CD4-positive, alpha-beta memory T cell (primary cell): ENCODE measurements at regions of chr3 and their contacts with region 1.

Region 1: DNA sequence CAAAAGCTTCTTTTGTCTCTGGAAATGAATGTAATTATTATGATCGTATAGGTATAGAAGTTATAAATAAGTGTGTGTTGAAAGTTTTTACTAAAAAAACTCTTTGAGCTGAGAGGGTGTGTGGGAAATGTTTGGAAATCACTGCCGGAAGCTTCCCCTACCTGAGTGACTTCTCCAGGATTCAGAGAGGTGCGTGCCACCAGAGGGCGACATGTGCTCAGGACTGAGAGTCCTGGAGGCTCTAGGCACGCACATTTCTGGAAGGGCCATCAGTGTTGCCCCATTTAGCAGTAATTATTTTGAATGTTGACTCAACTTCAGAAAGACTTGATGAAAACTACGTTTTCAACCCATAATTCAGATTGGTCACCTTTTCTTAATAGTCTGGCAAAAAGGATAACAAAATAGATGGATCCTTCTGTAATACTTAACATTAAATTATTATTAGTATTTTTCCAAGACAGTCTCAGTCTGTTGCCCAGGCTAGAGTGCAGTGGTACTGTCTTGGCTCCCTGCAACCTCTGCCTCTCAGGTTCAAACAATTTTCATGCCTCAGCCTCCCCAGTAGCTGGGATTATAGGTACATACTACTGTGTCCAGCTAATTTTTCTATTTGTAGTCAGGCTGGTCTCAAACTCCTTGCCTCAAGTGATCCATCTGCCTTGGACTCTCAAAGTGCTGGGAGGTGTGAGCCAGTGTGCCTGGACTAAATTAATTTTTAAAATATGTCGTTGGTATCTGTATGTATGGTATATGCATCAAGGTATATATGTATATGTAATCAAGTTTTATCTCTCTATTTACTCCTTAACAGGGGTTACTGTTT is 34.5 kb downstream of the GPR171 start:
- DNase-seq: peak; percentile 69 to 75 (median 72)
- H3K4me3 ChIP-seq: no peak overlapping the region
- H3K4me3 Mint-ChIP-seq: no peak overlapping the region
- H3K27ac ChIP-seq: no peak overlapping the region
- H3K27ac Mint-ChIP-seq: peak overlapping the region in 3 of 7 donors; percentile 2 to 76 (median 43)
- H3K4me1 ChIP-seq: peaks cover 34% of the 10 kb centered on the region
- H3K4me1 Mint-ChIP-seq: peaks cover 26 to 39% (median 33%) of the 10 kb centered on the region in 4 donors
- H3K27me3 ChIP-seq: no peaks in the 10 kb centered on the region
- H3K27me3 Mint-ChIP-seq: no peaks in the 10 kb centered on the region

Region 2: DNA sequence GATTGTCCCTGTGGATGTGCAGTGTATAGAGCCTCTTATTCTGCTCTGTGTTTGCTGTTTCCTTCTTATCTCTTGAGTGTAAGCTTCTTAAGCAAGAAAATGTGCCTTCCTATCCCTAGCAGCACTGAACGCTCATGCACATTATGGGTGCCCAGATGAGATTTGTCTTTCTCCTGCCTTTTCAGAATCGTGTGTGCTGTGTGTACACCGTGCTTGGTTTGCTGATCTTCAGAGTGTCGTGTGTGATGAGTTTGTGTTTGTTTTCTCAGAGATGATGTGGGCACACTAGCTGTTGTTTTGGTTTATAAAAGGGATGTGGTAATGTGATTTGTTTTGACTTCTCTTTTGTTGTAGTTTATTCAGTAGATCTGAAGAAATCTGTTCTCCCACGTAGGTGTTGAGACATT is 14.8 kb after region 1 on chr3:
- CTCF ChIA-PET with region 1: interaction called, 17 read pairs
- POLR2A ChIA-PET with region 1: interaction called, 41 read pairs
- intact Hi-C with region 1: no loop called
- DNase-seq: peak; percentile 32 to 61 (median 40)
- H3K4me3 ChIP-seq: peak overlapping the region in 1 of 2 donors; percentile 33
- H3K4me3 Mint-ChIP-seq: peak overlapping the region; percentile 27 to 84 (median 76)
- H3K27ac ChIP-seq: no peak overlapping the region
- H3K27ac Mint-ChIP-seq: peak overlapping the region; percentile 1 to 94 (median 91)
- H3K4me1 ChIP-seq: peaks cover 27% of the 10 kb centered on the region
- H3K4me1 Mint-ChIP-seq: peaks cover 23 to 32% (median 25%) of the 10 kb centered on the region in 4 donors
- H3K27me3 ChIP-seq: no peaks in the 10 kb centered on the region
- H3K27me3 Mint-ChIP-seq: no peaks in the 10 kb centered on the region

Region 3: DNA sequence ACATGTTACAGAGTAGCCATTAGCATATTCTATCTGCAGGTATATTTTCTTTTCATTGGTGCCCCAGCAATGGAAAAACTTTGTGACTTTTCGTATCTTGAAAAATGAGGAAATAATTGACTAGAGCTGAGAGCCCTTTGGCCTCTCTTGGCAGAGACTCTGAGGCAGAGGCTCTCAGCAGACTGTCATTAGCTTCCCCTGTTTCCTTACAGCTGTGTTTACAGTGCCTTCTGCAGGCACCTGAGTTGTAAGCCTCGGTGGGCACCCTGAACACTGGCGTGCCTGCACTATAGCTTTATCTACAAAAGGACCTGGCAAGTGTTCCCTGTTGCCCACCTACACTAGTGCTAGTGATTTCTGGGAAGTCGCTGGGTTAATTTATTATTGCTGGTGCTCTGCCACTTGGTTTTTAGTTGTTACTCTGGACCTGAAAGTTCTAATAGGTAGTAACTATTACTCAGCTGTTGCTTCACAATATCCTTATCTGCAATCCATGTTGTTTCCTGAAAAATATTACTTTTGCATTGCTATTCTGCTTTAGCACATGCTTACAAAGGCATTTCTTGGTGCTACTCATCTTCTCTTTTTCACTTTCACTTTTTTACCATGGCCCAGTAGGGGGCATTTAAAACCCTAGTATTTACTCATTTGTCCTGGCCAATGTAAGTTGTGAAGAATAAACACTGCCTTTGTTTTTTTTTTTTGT is 42.3 kb after region 1 on chr3:
- CTCF ChIA-PET with region 1: interaction called, 74 read pairs
- POLR2A ChIA-PET with region 1: interaction called, 8 read pairs
- intact Hi-C with region 1: loop called (anchors 1 kb)
- DNase-seq: no peak
- H3K4me3 ChIP-seq: no peak overlapping the region
- H3K4me3 Mint-ChIP-seq: peak overlapping the region in 5 of 8 donors; percentile 3 to 35 (median 32)
- H3K27ac ChIP-seq: no peak overlapping the region
- H3K27ac Mint-ChIP-seq: peak overlapping the region; percentile 52 to 97 (median 72)
- H3K4me1 ChIP-seq: peaks cover 44% of the 10 kb centered on the region
- H3K4me1 Mint-ChIP-seq: peaks cover 31 to 55% (median 41%) of the 10 kb centered on the region in 4 donors
- H3K27me3 ChIP-seq: no peaks in the 10 kb centered on the region
- H3K27me3 Mint-ChIP-seq: no peaks in the 10 kb centered on the region

Region 4: DNA sequence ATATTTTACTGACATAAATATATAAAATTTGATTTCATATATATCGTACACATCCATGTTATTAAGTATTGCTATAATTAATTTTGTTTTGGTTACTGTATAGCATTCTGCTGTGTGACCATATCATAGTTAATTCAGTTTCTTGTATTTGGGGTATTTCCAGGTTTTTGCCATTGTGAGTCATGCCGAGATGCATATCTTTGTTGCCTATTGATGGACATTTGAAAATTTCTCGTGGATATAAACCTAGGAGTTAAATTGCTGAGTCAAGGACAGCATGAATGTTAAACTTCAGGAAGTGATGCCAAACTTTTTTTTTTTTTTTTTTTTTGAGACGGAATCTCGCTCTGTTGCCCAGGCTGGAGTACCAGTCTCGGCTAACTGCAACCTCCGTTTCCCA is 68.3 kb after region 1 on chr3:
- CTCF ChIA-PET with region 1: interaction called, 21 read pairs
- POLR2A ChIA-PET with region 1: no interaction called
- intact Hi-C with region 1: no loop called
- DNase-seq: no peak
- H3K4me3 ChIP-seq: no peak overlapping the region
- H3K4me3 Mint-ChIP-seq: no peak overlapping the region
- H3K27ac ChIP-seq: no peak overlapping the region
- H3K27ac Mint-ChIP-seq: no peak overlapping the region
- H3K4me1 ChIP-seq: no peaks in the 10 kb centered on the region
- H3K4me1 Mint-ChIP-seq: peaks cover 0 to 12% (median 1%) of the 10 kb centered on the region in 4 donors
- H3K27me3 ChIP-seq: no peaks in the 10 kb centered on the region
- H3K27me3 Mint-ChIP-seq: peaks cover 0 to 1% of the 10 kb centered on the region in 2 donors

Region 5: GRCh38 chr3:151282921-151283320 is 114.4 kb after region 1 on chr3:
- CTCF ChIA-PET with region 1: interaction called, 221 read pairs
- POLR2A ChIA-PET with region 1: interaction called, 5 read pairs
- intact Hi-C with region 1: loop called (anchors 1 kb)
- DNase-seq: peak in 4 of 5 donors; percentile 64 to 71 (median 68)
- H3K4me3 ChIP-seq: no peak overlapping the region
- H3K4me3 Mint-ChIP-seq: no peak overlapping the region
- H3K27ac ChIP-seq: no peak overlapping the region
- H3K27ac Mint-ChIP-seq: peak overlapping the region in 6 of 7 donors; percentile 25 to 90 (median 77)
- H3K4me1 ChIP-seq: peaks cover 27% of the 10 kb centered on the region
- H3K4me1 Mint-ChIP-seq: peaks cover 20 to 36% (median 25%) of the 10 kb centered on the region in 4 donors
- H3K27me3 ChIP-seq: no peaks in the 10 kb centered on the region
- H3K27me3 Mint-ChIP-seq: no peaks in the 10 kb centered on the region

Region 6: GRCh38 chr3:151327571-151328198 is 159.2 kb after region 1 on chr3:
- CTCF ChIA-PET with region 1: interaction called, 23 read pairs
- POLR2A ChIA-PET with region 1: no interaction called
- intact Hi-C with region 1: loop called (anchors 1 kb)
- DNase-seq: peak in 2 of 5 donors; percentile 4 to 11
- H3K4me3 ChIP-seq: no peak overlapping the region
- H3K4me3 Mint-ChIP-seq: no peak overlapping the region
- H3K27ac ChIP-seq: no peak overlapping the region
- H3K27ac Mint-ChIP-seq: no peak overlapping the region
- H3K4me1 ChIP-seq: no peaks in the 10 kb centered on the region
- H3K4me1 Mint-ChIP-seq: peaks cover 2 to 8% (median 4%) of the 10 kb centered on the region in 4 donors
- H3K27me3 ChIP-seq: no peaks in the 10 kb centered on the region
- H3K27me3 Mint-ChIP-seq: peaks cover 7 to 8% of the 10 kb centered on the region in 2 donors